KBM-7 (cell line): ENCODE measurements at regions of chr1 and their contacts with region 1.

Region 1: GRCh38 chr1:42777852-42778251 is 6.9 kb upstream of the TMEM269 start:
- DNase-seq: peak; percentile 41

Region 2: DNA sequence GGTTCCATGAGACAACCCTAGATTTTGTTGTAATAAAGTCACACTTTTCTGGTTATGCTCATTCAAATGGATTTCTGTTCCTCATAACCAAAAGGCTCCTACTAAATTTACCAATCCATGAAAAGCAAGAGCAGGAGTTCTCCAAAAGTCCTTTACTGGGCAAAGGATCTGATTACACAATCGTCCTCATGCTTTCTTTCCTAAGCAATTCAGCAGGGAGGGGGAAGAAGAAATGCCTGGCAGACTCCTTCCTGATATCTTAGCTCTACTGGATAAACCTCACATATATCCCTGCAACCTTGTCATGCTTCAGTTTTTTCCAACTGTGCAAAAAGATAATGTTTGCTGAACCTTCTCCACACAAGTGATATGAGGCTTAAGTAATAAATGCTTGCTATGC is 692.3 kb before region 1 on chr1:
- in situ Hi-C with region 1: no loop called
- DNase-seq: no peak

Region 3: DNA sequence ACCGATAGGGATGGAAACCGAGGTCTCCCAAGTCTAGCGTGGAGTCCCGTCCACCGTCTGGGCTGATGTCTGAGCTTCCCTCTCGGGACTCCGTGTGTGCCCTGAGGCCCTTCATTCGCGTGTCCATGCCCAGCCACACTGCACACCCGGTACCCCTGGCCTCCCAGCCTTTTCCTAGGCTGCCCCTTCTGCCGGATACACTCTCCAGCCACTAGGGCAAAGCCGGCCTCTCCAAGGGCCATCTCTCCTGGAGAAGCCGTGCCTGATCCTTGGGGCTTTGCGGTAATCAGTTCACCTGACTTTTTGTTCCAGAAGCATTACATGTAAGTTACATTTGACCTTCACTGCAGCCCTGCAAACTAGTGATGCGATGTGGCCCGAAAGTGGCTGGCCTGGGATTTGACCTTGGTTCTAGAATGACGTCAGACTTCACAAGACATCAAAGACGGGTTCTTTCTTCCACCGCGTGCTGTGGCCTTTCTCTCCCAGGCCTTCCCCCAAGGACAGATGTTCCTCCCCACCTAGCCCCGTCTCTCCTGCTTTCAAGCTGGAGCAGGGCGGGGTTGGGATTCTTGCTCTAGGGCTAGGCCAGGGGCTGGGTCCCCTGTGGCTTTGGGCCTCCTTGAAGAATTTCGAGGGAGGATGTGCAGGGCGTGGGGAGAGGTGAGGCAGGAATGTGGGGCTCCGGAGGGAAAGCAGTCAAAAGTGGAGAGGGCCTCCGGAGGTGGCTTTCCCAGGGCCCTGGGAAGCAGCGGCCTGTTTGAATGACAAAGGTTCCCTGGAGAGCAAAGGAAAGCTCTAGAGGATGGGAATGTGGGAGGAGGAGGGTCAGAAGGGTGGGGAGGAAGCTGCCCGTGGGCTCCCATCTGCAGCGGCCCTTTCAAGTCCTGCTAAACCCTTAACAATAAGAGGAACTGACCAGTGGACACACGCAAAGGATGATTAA is 230.5 kb after region 1 on chr1:
- in situ Hi-C with region 1: no loop called
- DNase-seq: no peak

Region 4: GRCh38 chr1:43073490-43074230 is 295.8 kb after region 1 on chr1:
- in situ Hi-C with region 1: loop called (anchors 25 kb)
- DNase-seq: peak; percentile 78